ENCODE measurements at regions of chr11 and their contacts with region 1.

Region 1: DNA sequence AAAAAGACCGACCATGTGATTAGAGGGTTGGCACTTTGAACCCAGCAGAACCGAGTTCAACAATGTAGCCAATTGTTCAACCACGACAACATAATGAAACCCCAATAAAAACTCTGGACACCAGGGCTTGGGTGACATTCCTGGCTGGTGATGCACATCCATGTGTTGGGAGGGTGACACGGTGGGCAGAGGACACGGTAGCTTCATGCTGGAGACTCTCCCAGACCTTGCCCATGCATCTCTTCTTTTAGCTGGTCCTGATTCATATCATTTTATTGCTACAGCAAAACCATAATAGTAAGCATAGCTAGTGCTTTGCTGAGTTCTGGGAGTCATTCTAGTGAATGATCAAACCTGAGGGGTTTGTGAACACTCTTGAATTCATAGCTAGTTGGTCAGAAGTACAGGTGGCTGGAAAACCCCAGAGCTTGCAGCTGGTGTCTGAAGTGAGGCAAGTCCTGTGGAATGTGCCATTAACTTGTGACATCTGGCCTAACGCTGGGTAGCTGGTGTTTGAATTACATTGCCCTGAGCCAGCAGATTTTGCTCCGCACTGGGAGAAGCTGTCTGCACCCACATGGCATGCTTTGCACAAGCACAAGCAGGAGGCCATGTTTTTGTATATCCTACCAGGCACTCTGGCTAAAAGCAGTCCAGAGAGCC is 14.0 kb downstream of the RPUSD4 start:
- DNase-seq: no peak
- H3K4me3 ChIP-seq: no peak overlapping the region
- H3K27ac ChIP-seq: no peak overlapping the region
- H3K4me1 ChIP-seq: peaks cover 0 to 3% (median 0%) of the 10 kb centered on the region in 3 donors
- H3K27me3 ChIP-seq: no peaks in the 10 kb centered on the region
- CTCF ChIP-seq: no peak
- POLR2A ChIP-seq: no peak

Region 2: DNA sequence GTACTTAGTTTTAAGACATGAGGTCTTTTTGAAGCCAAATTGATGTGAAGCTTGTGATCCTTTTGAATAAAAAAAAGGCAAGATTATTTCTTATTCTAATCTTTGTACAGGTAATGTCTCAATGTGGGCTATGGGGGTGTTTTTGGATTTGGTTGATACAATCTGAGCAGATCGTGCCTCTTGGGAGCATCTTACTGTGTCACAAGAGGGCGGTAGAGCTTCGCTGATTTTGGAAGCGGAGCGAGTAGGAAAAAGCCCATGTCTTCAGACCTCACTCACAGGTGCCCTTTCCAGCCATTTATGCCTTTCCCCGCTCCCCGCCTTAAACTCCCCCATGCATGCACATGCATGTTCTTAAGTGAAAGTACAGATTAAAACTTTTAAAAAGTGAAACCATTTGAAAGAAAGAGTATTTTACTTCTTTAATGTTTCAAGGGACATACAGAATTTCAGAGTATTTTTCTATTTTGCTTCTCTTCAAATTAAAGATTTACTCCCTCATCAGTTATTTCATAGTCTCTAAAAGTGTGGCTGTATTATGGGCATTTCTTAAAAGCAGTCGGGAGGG is 274.3 kb before region 1 on chr11:
- intact Hi-C with region 1: loop called (anchors 5 kb)
- DNase-seq: no peak
- H3K4me3 ChIP-seq: no peak overlapping the region
- H3K27ac ChIP-seq: no peak overlapping the region
- H3K4me1 ChIP-seq: no peaks in the 10 kb centered on the region
- H3K27me3 ChIP-seq: peaks cover 0 to 33% (median 0%) of the 10 kb centered on the region in 4 donors
- CTCF ChIP-seq: peak; percentile 54 to 80 (median 69)
- POLR2A ChIP-seq: no peak

Region 3: GRCh38 chr11:126246636-126247035 is 49.2 kb after region 1 on chr11:
- intact Hi-C with region 1: no loop called
- DNase-seq: no peak
- H3K4me3 ChIP-seq: no peak overlapping the region
- H3K27ac ChIP-seq: no peak overlapping the region
- H3K4me1 ChIP-seq: no peaks in the 10 kb centered on the region
- H3K27me3 ChIP-seq: no peaks in the 10 kb centered on the region
- CTCF ChIP-seq: no peak
- POLR2A ChIP-seq: no peak